Panc1 (cell line): ENCODE measurements at regions of chr5 and their contacts with region 1.

Region 1: DNA sequence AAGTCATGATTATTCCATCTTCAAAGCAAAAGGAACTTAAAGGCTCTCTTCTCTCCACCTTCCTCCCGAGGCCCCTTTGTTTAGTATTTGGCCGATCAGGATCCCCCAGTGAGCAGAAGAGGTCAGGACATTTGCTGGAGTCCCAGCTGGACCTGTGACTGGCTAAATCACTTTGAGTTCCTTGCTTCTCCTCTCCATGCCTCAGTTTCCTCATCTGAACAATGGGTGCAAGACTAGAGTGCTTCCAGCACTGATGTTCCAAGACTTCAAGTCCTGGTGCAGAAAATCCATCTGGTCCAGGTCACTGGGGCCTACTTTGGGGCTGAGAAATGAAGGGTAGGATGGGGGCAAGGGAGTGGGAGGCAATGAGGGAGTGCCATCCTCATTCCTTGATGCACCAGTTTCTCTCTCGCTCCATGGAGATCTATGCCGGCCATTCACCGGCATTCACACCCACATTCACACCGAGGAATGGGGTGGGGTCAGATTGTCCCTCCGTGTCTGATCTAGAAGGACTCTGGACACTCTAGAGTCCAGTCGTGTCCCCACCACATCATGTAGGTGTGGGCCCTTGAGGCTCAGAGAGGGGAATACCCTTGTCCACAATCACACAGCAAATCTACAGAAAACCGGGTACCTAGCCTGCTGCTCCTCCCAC is 38.7 kb upstream of the IL17B start:
- DNase-seq: no peak
- ATAC-seq: no peak
- H3K4me3 ChIP-seq: no peak overlapping the region
- H3K27ac ChIP-seq: no peak overlapping the region
- H3K4me1 ChIP-seq: peaks cover 3% of the 10 kb centered on the region; the same call in 1 of the 2 replicates
- H3K27me3 ChIP-seq: no peaks in the 10 kb centered on the region
- CTCF ChIP-seq: no peak

Region 2: GRCh38 chr5:149406203-149406978 is 11.4 kb before region 1 on chr5:
- CTCF ChIA-PET with region 1: no interaction called
- POLR2A ChIA-PET with region 1: interaction called, 10 read pairs
- in situ Hi-C with region 1: no loop called
- intact Hi-C with region 1: no loop called
- DNase-seq: no peak
- ATAC-seq: no peak
- H3K4me3 ChIP-seq: peak overlapping the region in 1 of 2 experiments; percentile 22; a peak in 1 of 4 replicates
- H3K27ac ChIP-seq: no peak overlapping the region
- H3K4me1 ChIP-seq: no peaks in the 10 kb centered on the region
- H3K27me3 ChIP-seq: no peaks in the 10 kb centered on the region
- CTCF ChIP-seq: no peak

Region 3: DNA sequence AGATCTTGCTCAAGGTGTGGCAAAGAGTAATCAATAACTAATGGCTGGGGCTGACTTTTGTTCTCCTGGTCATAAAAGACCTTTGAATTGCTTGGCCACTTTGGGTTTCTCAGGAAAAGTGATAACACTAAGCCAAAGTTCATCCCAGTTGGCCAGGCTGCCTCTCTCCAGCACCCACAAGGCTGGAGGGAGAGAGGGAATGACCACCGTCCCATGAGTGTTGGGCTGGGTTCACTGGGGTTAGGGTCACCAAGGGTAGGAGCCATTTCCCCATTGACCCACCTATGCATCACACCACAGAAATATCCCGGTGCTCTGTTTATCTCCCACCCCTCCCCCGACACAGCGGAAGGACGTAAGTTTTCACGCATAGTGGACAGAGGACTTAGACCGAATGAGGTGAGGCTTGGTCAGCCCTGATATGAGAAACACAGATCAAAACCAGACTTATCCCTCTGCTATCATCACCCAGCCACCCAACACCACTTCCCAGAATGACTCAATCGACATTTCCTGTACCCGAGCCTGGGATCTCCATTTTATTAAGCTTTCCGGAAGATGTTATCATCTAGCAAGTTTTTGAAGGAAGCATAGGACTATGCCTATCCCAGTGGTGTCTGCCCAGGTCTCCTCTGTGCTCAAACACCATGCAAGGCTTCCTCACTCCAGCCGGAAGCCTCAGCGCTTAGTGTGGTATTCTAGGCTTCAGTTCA is 285.2 kb after region 1 on chr5:
- CTCF ChIA-PET with region 1: no interaction called
- POLR2A ChIA-PET with region 1: no interaction called
- in situ Hi-C with region 1: no loop called
- intact Hi-C with region 1: no loop called
- DNase-seq: no peak
- ATAC-seq: no peak
- H3K4me3 ChIP-seq: no peak overlapping the region
- H3K27ac ChIP-seq: no peak overlapping the region
- H3K4me1 ChIP-seq: no peaks in the 10 kb centered on the region
- H3K27me3 ChIP-seq: peaks cover 14% of the 10 kb centered on the region
- CTCF ChIP-seq: no peak